ENCODE measurements at regions of chr22 and their contacts with region 1.

Region 1: GRCh38 chr22:37148742-37149665 is 712 bp downstream of the IL2RB start:
- DNase-seq: peak in 1 of 9 experiments; percentile 36
- ATAC-seq: no peak
- H3K4me3 ChIP-seq: peak overlapping the region; percentile 91 to 98
- H3K4me3 Mint-ChIP-seq: peak overlapping the region; percentile 96
- H3K27ac ChIP-seq: peak overlapping the region; percentile 84 to 94
- H3K27ac Mint-ChIP-seq: peak overlapping the region; percentile 96
- H3K4me1 ChIP-seq: peaks cover 60% of the 10 kb centered on the region
- H3K4me1 Mint-ChIP-seq: peaks cover 61% of the 10 kb centered on the region
- H3K27me3 ChIP-seq: no peaks in the 10 kb centered on the region
- H3K27me3 Mint-ChIP-seq: no peaks in the 10 kb centered on the region
- CTCF ChIP-seq: no peak

Region 2: GRCh38 chr22:37077884-37078485 is 71.0 kb before region 1 on chr22:
- CTCF ChIA-PET with region 1: interaction called, 3 read pairs
- POLR2A ChIA-PET with region 1: interaction called, 7 read pairs
- intact Hi-C with region 1: loop called (anchors 1 kb)
- DNase-seq: peak; percentile 68 to 93 (median 83)
- ATAC-seq: peak; percentile 14
- H3K4me3 ChIP-seq: no peak overlapping the region
- H3K4me3 Mint-ChIP-seq: peak overlapping the region; percentile 47
- H3K27ac ChIP-seq: peak overlapping the region in 1 of 2 experiments; percentile 51
- H3K27ac Mint-ChIP-seq: peak overlapping the region; percentile 99
- H3K4me1 ChIP-seq: peaks cover 39% of the 10 kb centered on the region
- H3K4me1 Mint-ChIP-seq: peaks cover 31% of the 10 kb centered on the region
- H3K27me3 ChIP-seq: no peaks in the 10 kb centered on the region
- H3K27me3 Mint-ChIP-seq: peaks cover 3% of the 10 kb centered on the region
- CTCF ChIP-seq: peak; percentile 98

Region 3: GRCh38 chr22:37193629-37194191 is 44.7 kb after region 1 on chr22:
- CTCF ChIA-PET with region 1: interaction called, 52 read pairs
- POLR2A ChIA-PET with region 1: interaction called, 12 read pairs
- intact Hi-C with region 1: loop called in 1 of 2 experiments (anchors 1 kb)
- DNase-seq: peak in 5 of 9 experiments; percentile 30 to 85 (median 50)
- ATAC-seq: peak; percentile 56
- H3K4me3 ChIP-seq: peak overlapping the region in 1 of 2 experiments; percentile 5
- H3K4me3 Mint-ChIP-seq: peak overlapping the region; percentile 65
- H3K27ac ChIP-seq: peak overlapping the region; percentile 10 to 73
- H3K27ac Mint-ChIP-seq: peak overlapping the region; percentile 83
- H3K4me1 ChIP-seq: peaks cover 49% of the 10 kb centered on the region
- H3K4me1 Mint-ChIP-seq: peaks cover 65% of the 10 kb centered on the region
- H3K27me3 ChIP-seq: no peaks in the 10 kb centered on the region
- H3K27me3 Mint-ChIP-seq: no peaks in the 10 kb centered on the region
- CTCF ChIP-seq: no peak

Measured in CD8-positive, alpha-beta T cell (primary cell).